ENCODE measurements at regions of chr2 and their contacts with region 1.

Region 1: GRCh38 chr2:2291500-2292260 is 39.4 kb downstream of the MYT1L start:
- DNase-seq: no peak
- ATAC-seq: peak; percentile 89

Region 2: DNA sequence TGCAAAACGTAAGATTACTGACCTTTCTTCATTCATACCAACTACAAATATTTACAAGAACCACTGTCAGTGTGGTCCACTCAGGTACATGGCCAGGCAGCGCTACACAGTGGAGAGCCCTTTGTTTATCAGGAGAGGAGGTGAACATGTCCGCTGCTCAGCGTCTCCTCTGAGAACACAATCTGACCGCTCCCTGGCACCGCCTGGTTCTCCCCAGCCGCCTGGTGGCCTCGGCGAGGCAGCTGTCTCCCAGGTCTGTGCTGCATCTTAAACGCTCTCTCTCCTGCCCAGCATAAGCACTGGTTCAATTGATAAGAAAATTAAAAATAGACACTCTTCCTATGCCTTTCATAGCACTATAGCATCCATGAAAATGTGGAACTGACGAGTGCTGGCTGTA is 400.5 kb before region 1 on chr2:
- intact Hi-C with region 1: loop called (anchors 10 kb)
- DNase-seq: peak; percentile 55
- ATAC-seq: peak; percentile 94

Region 3: DNA sequence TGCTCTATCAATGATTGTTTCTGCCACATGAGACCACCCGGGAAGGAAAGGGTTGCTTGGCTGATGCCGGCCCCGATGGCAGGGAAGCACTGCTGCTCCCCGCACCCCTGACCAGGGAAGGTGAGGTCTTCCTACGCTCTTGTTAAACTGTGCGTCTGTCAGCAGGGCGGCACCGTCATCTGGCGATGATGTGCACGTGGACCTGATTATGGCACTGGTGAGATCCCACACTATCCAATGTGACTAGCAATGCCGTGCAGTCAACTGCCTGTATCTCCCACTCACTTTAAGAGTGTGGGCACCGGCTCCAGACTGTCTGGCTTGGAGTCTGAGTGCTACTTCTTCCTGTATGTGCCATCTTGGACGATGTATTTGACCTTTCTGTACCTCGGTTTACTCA is 169.8 kb before region 1 on chr2:
- intact Hi-C with region 1: loop called (anchors 5 kb)
- DNase-seq: no peak
- ATAC-seq: no peak

Measured in Right ventricle myocardium superior (tissue), 1 donor.